CD8-positive, alpha-beta T cell (primary cell): ENCODE measurements at regions of chr6 and their contacts with region 1.

Region 1: GRCh38 chr6:62371453-62372210 is 85.6 kb upstream of the KHDRBS2 start:
- DNase-seq: no peak
- ATAC-seq: no peak
- H3K4me3 ChIP-seq: no peak overlapping the region
- H3K4me3 Mint-ChIP-seq: no peak overlapping the region
- H3K27ac ChIP-seq: no peak overlapping the region
- H3K27ac Mint-ChIP-seq: no peak overlapping the region
- H3K4me1 ChIP-seq: no peaks in the 10 kb centered on the region
- H3K4me1 Mint-ChIP-seq: no peaks in the 10 kb centered on the region
- H3K27me3 ChIP-seq: no peaks in the 10 kb centered on the region
- H3K27me3 Mint-ChIP-seq: no peaks in the 10 kb centered on the region
- CTCF ChIP-seq: no peak

Region 2: DNA sequence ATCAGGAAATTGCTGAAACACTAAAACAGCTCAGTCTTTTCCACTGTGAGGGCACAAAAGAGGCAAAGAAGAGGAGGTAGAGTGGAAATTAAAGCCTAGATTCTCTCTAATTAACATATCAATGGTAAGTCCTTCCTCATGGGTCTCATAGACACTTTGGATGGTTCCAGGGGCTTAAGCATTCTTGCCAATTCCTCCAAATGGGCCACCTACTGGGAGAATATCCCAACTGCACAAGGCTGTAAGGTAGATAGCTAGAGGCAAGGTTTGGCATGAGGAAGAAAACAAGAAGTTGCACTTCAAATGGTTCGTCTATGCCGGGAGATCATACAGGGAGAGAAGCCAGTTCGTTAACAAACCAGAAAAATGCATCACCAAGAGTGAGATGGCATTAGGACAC is 22.0 kb after region 1 on chr6:
- CTCF ChIA-PET with region 1: no interaction called
- POLR2A ChIA-PET with region 1: no interaction called
- intact Hi-C with region 1: loop called in 1 of 2 experiments (anchors 2 kb)
- DNase-seq: no peak
- ATAC-seq: no peak
- H3K4me3 ChIP-seq: no peak overlapping the region
- H3K4me3 Mint-ChIP-seq: no peak overlapping the region
- H3K27ac ChIP-seq: no peak overlapping the region
- H3K27ac Mint-ChIP-seq: no peak overlapping the region
- H3K4me1 ChIP-seq: no peaks in the 10 kb centered on the region
- H3K4me1 Mint-ChIP-seq: no peaks in the 10 kb centered on the region
- H3K27me3 ChIP-seq: no peaks in the 10 kb centered on the region
- H3K27me3 Mint-ChIP-seq: no peaks in the 10 kb centered on the region
- CTCF ChIP-seq: no peak